ENCODE measurements at regions of chr1 and their contacts with region 1.

Region 1: GRCh38 chr1:39973503-39974135 is 18.7 kb downstream of the MFSD2A start:
- DNase-seq: peak; percentile 57
- H3K4me3 ChIP-seq: no peak overlapping the region
- H3K27ac ChIP-seq: no peak overlapping the region
- H3K4me1 ChIP-seq: peaks cover 30% of the 10 kb centered on the region
- H3K27me3 ChIP-seq: no peaks in the 10 kb centered on the region
- CTCF ChIP-seq: peak; percentile 97 to 98

Region 2: GRCh38 chr1:39609618-39610331 is 363.8 kb before region 1 on chr1:
- CTCF ChIA-PET with region 1: no interaction called
- dilution Hi-C with region 1: no loop called
- in situ Hi-C with region 1: no loop called
- intact Hi-C with region 1: loop called (anchors 5 kb)
- DNase-seq: peak; percentile 15
- H3K4me3 ChIP-seq: no peak overlapping the region
- H3K27ac ChIP-seq: no peak overlapping the region
- H3K4me1 ChIP-seq: peaks cover 4% of the 10 kb centered on the region
- H3K27me3 ChIP-seq: no peaks in the 10 kb centered on the region
- CTCF ChIP-seq: peak; percentile 59 to 64

Region 3: GRCh38 chr1:39666772-39667171 is 306.8 kb before region 1 on chr1:
- CTCF ChIA-PET with region 1: no interaction called
- dilution Hi-C with region 1: no loop called
- in situ Hi-C with region 1: no loop called
- intact Hi-C with region 1: no loop called
- DNase-seq: no peak
- H3K4me3 ChIP-seq: no peak overlapping the region
- H3K27ac ChIP-seq: no peak overlapping the region
- H3K4me1 ChIP-seq: peaks cover 3% of the 10 kb centered on the region
- H3K27me3 ChIP-seq: peaks cover 15% of the 10 kb centered on the region
- CTCF ChIP-seq: no peak

Region 4: GRCh38 chr1:39825432-39825951 is 148.1 kb before region 1 on chr1:
- CTCF ChIA-PET with region 1: no interaction called
- dilution Hi-C with region 1: no loop called
- in situ Hi-C with region 1: loop called in 1 of 2 experiments (anchors 10 kb)
- intact Hi-C with region 1: no loop called
- DNase-seq: no peak
- H3K4me3 ChIP-seq: no peak overlapping the region
- H3K27ac ChIP-seq: no peak overlapping the region
- H3K4me1 ChIP-seq: no peaks in the 10 kb centered on the region
- H3K27me3 ChIP-seq: no peaks in the 10 kb centered on the region
- CTCF ChIP-seq: no peak

Region 5: GRCh38 chr1:39901698-39902459 is 71.7 kb before region 1 on chr1 and contains the start of gene MYCL:
- CTCF ChIA-PET with region 1: no interaction called
- dilution Hi-C with region 1: loop called (anchors 5 kb)
- in situ Hi-C with region 1: no loop called
- intact Hi-C with region 1: no loop called
- DNase-seq: peak; percentile 92
- H3K4me3 ChIP-seq: peak within 1 kb of the TSS; percentile 69 to 89 (median 78)
- H3K27ac ChIP-seq: no peak within 1 kb of the TSS
- H3K4me1 ChIP-seq: peaks cover 8% of the 10 kb centered on the region
- H3K27me3 ChIP-seq: peaks cover 2% of the 10 kb centered on the region
- CTCF ChIP-seq: peak; percentile 47 to 86
- total RNA-seq, gene MYCL: 3.1 to 4.5 TPM

Region 6: GRCh38 chr1:39933956-39934941 is 39.4 kb before region 1 on chr1:
- CTCF ChIA-PET with region 1: interaction called, 8 read pairs
- dilution Hi-C with region 1: loop called (anchors 5 kb)
- in situ Hi-C with region 1: no loop called
- intact Hi-C with region 1: loop called (anchors 5 kb)
- DNase-seq: peak; percentile 97
- H3K4me3 ChIP-seq: no peak overlapping the region
- H3K27ac ChIP-seq: peak overlapping the region; percentile 63
- H3K4me1 ChIP-seq: peaks cover 18% of the 10 kb centered on the region
- H3K27me3 ChIP-seq: no peaks in the 10 kb centered on the region
- CTCF ChIP-seq: no peak

Region 7: GRCh38 chr1:40032240-40032891 is 58.7 kb after region 1 on chr1:
- CTCF ChIA-PET with region 1: interaction called, 6 read pairs
- dilution Hi-C with region 1: no loop called
- in situ Hi-C with region 1: loop called (anchors 5 kb)
- intact Hi-C with region 1: loop called (anchors 1 kb)
- DNase-seq: peak; percentile 60
- H3K4me3 ChIP-seq: no peak overlapping the region
- H3K27ac ChIP-seq: no peak overlapping the region
- H3K4me1 ChIP-seq: peaks cover 30% of the 10 kb centered on the region
- H3K27me3 ChIP-seq: no peaks in the 10 kb centered on the region
- CTCF ChIP-seq: peak; percentile 69 to 70

Region 8: DNA sequence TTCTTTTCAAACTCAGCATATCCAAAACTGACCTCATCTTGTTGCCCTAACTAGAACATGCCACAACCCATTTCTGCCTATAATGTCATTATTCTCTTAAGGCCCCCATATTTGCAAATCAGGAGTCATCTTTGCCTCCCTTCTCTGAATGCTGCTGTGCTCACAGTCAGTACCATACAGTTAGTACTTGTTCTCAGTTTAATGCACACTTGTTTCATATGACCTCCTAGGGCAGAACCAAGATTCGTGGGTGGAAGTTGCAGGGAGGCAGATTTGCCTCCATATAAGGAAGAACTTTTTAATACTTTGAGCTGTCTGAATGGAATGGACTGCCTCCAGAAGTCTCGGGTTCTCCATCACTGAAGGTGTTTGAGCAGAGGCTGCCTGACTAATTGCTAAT is 76.1 kb after region 1 on chr1:
- CTCF ChIA-PET with region 1: no interaction called
- dilution Hi-C with region 1: loop called (anchors 5 kb)
- in situ Hi-C with region 1: no loop called
- intact Hi-C with region 1: no loop called
- DNase-seq: no peak
- H3K4me3 ChIP-seq: no peak overlapping the region
- H3K27ac ChIP-seq: no peak overlapping the region
- H3K4me1 ChIP-seq: peaks cover 49% of the 10 kb centered on the region
- H3K27me3 ChIP-seq: no peaks in the 10 kb centered on the region
- CTCF ChIP-seq: no peak

Measured in mammary epithelial cell (primary cell).